ENCODE measurements at regions of chr5 and their contacts with region 1.

Region 1: DNA sequence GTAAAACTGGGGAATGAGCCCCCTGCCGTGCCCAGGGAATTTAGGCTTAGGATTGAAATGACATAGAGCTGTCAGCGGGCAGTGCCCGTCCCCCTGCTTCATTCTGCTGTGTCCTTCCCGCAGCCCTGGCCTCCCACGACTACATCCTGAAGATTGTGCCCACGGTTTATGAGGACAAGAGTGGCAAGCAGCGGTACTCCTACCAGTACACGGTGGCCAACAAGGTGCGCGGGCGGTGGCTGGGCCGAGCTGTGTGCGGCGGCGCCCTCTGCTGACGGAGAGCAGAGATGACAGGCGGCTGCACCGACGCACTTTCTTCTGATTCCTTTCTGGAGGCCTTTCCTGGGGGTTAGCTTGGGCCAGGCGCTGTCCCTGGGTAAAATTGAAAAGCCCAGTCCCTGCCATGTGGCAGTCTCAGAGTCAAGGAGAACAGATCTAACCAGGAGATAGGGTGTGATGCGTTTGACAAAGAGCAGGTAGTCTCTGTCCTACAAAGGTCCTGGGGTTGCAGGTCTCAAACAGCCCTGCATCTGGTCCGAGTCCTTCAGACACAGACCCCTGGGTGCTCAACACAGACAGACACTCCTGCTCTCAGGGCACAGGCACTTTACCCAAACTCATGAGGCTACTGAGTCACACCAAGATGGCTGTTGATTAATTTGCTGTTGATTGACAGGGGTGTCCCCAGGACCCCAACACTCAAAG is 26.8 kb upstream of the RPL26L1 start:
- DNase-seq: peak; percentile 70
- H3K4me3 ChIP-seq: no peak overlapping the region
- H3K27ac ChIP-seq: peak overlapping the region; percentile 76
- H3K4me1 ChIP-seq: peaks cover 25% of the 10 kb centered on the region
- H3K27me3 ChIP-seq: no peaks in the 10 kb centered on the region
- CTCF ChIP-seq: peak; percentile 97

Region 2: DNA sequence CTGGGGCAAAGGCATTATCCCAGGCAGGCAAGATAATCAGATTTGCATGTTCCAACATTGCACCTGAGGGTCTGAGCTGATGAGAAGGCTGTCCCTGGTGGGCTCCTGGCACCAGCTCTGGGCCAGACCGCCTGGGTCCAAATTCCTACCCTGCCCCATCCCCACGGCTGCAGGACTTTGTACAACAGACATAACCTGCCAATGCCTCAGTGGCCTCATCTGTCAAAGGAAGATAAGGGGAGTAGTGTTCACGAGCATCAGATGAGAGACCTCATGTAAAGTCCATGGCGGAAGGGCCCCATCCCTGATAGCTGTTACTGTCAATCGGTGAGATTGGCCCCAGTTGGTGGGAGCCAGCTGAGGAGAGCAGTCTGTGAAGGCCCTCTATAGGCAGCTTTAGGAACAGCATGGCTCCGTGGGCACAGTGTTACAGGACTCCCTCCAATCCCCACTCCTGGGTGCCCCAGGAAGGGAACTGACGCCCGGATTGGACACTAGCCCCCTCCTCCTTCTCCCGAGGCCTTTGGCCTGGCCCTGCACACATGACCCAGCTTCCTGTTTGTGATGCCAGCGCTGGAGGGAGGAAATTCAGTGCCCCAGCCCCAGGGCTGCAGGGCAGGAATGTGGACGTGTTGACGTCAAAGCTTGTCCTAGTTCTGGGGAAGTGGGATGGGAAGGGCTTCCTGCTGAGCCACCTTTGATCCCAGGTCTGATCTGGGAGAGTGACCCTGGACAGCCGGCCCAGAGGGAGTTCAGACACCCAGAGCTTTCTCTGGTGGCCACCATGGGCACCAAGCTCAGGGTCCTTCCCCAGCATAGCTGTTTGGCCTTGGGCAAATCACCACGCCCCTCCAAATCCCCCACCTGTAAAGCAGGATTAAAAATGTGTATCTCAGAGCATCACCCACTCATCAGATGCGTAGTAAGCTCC is 217.7 kb before region 1 on chr5:
- intact Hi-C with region 1: loop called (anchors 5 kb)
- DNase-seq: peak; percentile 82
- H3K4me3 ChIP-seq: no peak overlapping the region
- H3K27ac ChIP-seq: peak overlapping the region; percentile 82
- H3K4me1 ChIP-seq: peaks cover 52% of the 10 kb centered on the region
- H3K27me3 ChIP-seq: no peaks in the 10 kb centered on the region
- CTCF ChIP-seq: peak; percentile 92

Region 3: GRCh38 chr5:172795318-172795977 is 137.0 kb before region 1 on chr5:
- intact Hi-C with region 1: no loop called
- DNase-seq: peak; percentile 95
- H3K4me3 ChIP-seq: no peak overlapping the region
- H3K27ac ChIP-seq: peak overlapping the region; percentile 82
- H3K4me1 ChIP-seq: peaks cover 29% of the 10 kb centered on the region
- H3K27me3 ChIP-seq: no peaks in the 10 kb centered on the region
- CTCF ChIP-seq: peak; percentile 28

Measured in left ventricle myocardium inferior (tissue), 1 donor.